Dendritic cell treated with granulocyte-macrophage colony-stimulating factor and Interleukin-4, amounts not matched to agents 40 ng/mL and 50 ng/mL, for 4 days (primary cell): ENCODE measurements at regions of chr7 and their contacts with region 1.

Region 1: GRCh38 chr7:115499956-115500355 is 530.6 kb downstream of the TFEC start:
- H3K4me3 Mint-ChIP-seq: no peak overlapping the region
- H3K27ac Mint-ChIP-seq: no peak overlapping the region
- H3K4me1 Mint-ChIP-seq: peaks cover 18% of the 10 kb centered on the region
- H3K27me3 Mint-ChIP-seq: peaks cover 5% of the 10 kb centered on the region

Region 2: GRCh38 chr7:115475761-115476385 is 24.1 kb before region 1 on chr7:
- intact Hi-C with region 1: loop called (anchors 1 kb)
- H3K4me3 Mint-ChIP-seq: no peak overlapping the region
- H3K27ac Mint-ChIP-seq: no peak overlapping the region
- H3K4me1 Mint-ChIP-seq: peaks cover 10% of the 10 kb centered on the region
- H3K27me3 Mint-ChIP-seq: peaks cover 31% of the 10 kb centered on the region